Natural killer cell (primary cell): ENCODE measurements at regions of chr3 and their contacts with region 1.

Region 1: GRCh38 chr3:8622873-8623691 is 21.5 kb downstream of the SSUH2 start:
- DNase-seq: peak; percentile 22 to 54
- ATAC-seq: peak in 2 of 3 donors; percentile 60 to 76
- H3K4me3 ChIP-seq: no peak overlapping the region
- H3K4me3 Mint-ChIP-seq: no peak overlapping the region
- H3K27ac ChIP-seq: no peak overlapping the region
- H3K27ac Mint-ChIP-seq: peak overlapping the region in 1 of 2 donors; percentile 63
- H3K4me1 ChIP-seq: peaks cover 11% of the 10 kb centered on the region
- H3K4me1 Mint-ChIP-seq: peaks cover 0 to 10% of the 10 kb centered on the region in 2 donors
- H3K27me3 ChIP-seq: no peaks in the 10 kb centered on the region
- H3K27me3 Mint-ChIP-seq: peaks cover 0 to 8% of the 10 kb centered on the region in 2 donors
- CTCF ChIP-seq: peak; percentile 67

Region 2: GRCh38 chr3:8441969-8442559 is 181.0 kb before region 1 on chr3:
- intact Hi-C with region 1: loop called (anchors 5 kb)
- DNase-seq: no peak
- ATAC-seq: no peak
- H3K4me3 ChIP-seq: no peak overlapping the region
- H3K4me3 Mint-ChIP-seq: no peak overlapping the region
- H3K27ac ChIP-seq: no peak overlapping the region
- H3K27ac Mint-ChIP-seq: no peak overlapping the region
- H3K4me1 ChIP-seq: no peaks in the 10 kb centered on the region
- H3K4me1 Mint-ChIP-seq: no peaks in the 10 kb centered on the region
- H3K27me3 ChIP-seq: no peaks in the 10 kb centered on the region
- H3K27me3 Mint-ChIP-seq: peaks cover 0 to 9% of the 10 kb centered on the region in 2 donors
- CTCF ChIP-seq: peak; percentile 11

Region 3: DNA sequence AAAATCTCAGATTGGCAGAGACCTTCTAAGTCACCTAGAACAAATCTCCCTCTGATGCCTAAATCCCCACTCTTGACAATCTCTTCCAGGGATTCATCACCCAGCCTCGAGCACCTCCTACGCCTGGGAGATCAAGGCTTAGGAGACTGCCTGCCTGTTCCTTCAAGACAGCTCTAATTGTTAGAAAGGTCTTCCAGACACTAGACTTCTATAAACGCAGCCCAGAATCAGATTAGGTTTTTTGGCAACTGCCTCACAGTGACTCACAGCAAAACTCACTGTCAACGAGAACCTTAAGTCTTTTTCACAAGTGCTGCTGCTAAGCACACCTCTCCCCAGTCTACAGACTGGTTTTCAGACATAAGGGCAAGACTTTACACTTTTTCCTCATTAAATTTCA is 603.2 kb after region 1 on chr3:
- intact Hi-C with region 1: no loop called
- DNase-seq: no peak
- ATAC-seq: no peak
- H3K4me3 ChIP-seq: no peak overlapping the region
- H3K4me3 Mint-ChIP-seq: no peak overlapping the region
- H3K27ac ChIP-seq: no peak overlapping the region
- H3K27ac Mint-ChIP-seq: no peak overlapping the region
- H3K4me1 ChIP-seq: peaks cover 10% of the 10 kb centered on the region
- H3K4me1 Mint-ChIP-seq: no peaks in the 10 kb centered on the region
- H3K27me3 ChIP-seq: no peaks in the 10 kb centered on the region
- H3K27me3 Mint-ChIP-seq: no peaks in the 10 kb centered on the region
- CTCF ChIP-seq: no peak